ENCODE measurements at regions of chr4 and their contacts with region 1.

Region 1: GRCh38 chr4:145618932-145619638 is at the start of gene MMAA:
- DNase-seq: peak; percentile 77
- H3K4me3 ChIP-seq: peak within 1 kb of the TSS; percentile 89
- H3K27ac ChIP-seq: peak within 1 kb of the TSS; percentile 88
- H3K27me3 ChIP-seq: no peaks in the 10 kb centered on the region
- CTCF ChIP-seq: peak; percentile 68
- polyA plus RNA-seq, gene MMAA: 7.2 and 8.8 TPM in 2 replicates

Region 2: GRCh38 chr4:145180298-145181090 is 438.6 kb before region 1 on chr4 and contains the start of gene OTUD4:
- CTCF ChIA-PET with region 1: interaction called, 21 read pairs
- POLR2A ChIA-PET with region 1: no interaction called
- DNase-seq: peak; percentile 81
- H3K4me3 ChIP-seq: peak within 1 kb of the TSS; percentile 86
- H3K27ac ChIP-seq: peak within 1 kb of the TSS; percentile 86
- H3K27me3 ChIP-seq: peaks cover 3% of the 10 kb centered on the region
- CTCF ChIP-seq: peak; percentile 23; the same call in 1 of the 2 replicates
- polyA plus RNA-seq, gene OTUD4: 19.7 and 27.1 TPM in 2 replicates

Region 3: GRCh38 chr4:145216535-145216934 is 402.6 kb before region 1 on chr4:
- CTCF ChIA-PET with region 1: interaction called, 140 read pairs
- POLR2A ChIA-PET with region 1: no interaction called
- DNase-seq: no peak
- H3K4me3 ChIP-seq: no peak overlapping the region
- H3K27ac ChIP-seq: no peak overlapping the region
- H3K27me3 ChIP-seq: no peaks in the 10 kb centered on the region
- CTCF ChIP-seq: peak; percentile 78

Region 4: GRCh38 chr4:145557720-145558119 is 61.4 kb before region 1 on chr4:
- CTCF ChIA-PET with region 1: interaction called, 10 read pairs
- POLR2A ChIA-PET with region 1: no interaction called
- DNase-seq: peak; percentile 43
- H3K4me3 ChIP-seq: no peak overlapping the region
- H3K27ac ChIP-seq: no peak overlapping the region
- H3K27me3 ChIP-seq: no peaks in the 10 kb centered on the region
- CTCF ChIP-seq: peak; percentile 99

Region 5: DNA sequence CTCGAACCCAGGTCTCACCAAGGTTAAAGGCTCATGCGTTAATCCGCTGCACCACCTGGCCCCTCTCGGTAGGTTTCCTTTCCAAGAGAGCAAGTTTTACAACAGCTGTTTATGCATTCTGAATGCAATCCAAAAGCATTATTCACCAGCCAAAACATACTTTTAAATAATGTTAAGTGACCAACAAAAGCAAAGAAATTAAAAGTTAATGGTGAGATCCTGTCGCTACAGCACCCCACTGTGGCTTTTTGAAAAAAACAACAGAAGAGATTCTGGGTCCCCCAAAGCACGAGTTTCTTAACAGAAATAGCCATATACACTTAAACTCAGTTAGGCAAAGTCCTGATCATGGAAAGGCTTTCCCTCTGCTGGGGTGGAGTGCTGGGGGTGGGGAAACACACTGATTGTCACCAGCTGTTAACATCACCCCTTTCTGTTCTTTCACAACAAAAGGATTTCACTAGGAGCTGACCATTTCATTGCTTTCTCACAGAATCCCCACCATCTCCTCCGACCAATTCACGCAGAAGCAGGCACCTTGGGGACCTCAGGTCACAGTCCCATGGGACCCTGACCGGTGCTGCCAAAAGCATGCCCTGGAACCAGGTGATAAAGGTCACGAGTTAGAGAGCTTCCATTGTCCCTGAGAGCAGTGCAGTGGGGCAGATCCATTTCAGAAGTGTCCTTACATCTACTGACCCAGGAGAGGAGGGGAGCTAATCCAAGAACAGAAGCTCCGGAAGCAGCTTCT is 268.3 kb after region 1 on chr4:
- CTCF ChIA-PET with region 1: interaction called, 15 read pairs
- POLR2A ChIA-PET with region 1: no interaction called
- DNase-seq: peak; percentile 49
- H3K4me3 ChIP-seq: no peak overlapping the region
- H3K27ac ChIP-seq: peak overlapping the region; percentile 81
- H3K27me3 ChIP-seq: no peaks in the 10 kb centered on the region
- CTCF ChIP-seq: 0 out of 2 replicates have a peak, but pooled peaks have one; percentile 3

Measured in AG04450 (cell line).